Activated CD4-positive, alpha-beta memory T cell treated with anti-CD3 and anti-CD28 coated beads for 36 hours (primary cell): ENCODE measurements at regions of chr14 and their contacts with region 1.

Region 1: GRCh38 chr14:60331201-60332045 is 82.4 kb downstream of the PPM1A start:
- DNase-seq: peak; percentile 85
- H3K4me3 Mint-ChIP-seq: peak overlapping the region; percentile 84
- H3K27ac Mint-ChIP-seq: peak overlapping the region; percentile 85
- H3K4me1 Mint-ChIP-seq: peaks cover 37% of the 10 kb centered on the region
- H3K27me3 Mint-ChIP-seq: peaks cover 36% of the 10 kb centered on the region

Region 2: GRCh38 chr14:59964251-59965007 is 367.0 kb before region 1 on chr14:
- CTCF ChIA-PET with region 1: interaction called, 13 read pairs
- POLR2A ChIA-PET with region 1: no interaction called
- intact Hi-C with region 1: loop called (anchors 5 kb)
- DNase-seq: no peak
- H3K4me3 Mint-ChIP-seq: peak overlapping the region; percentile 74
- H3K27ac Mint-ChIP-seq: peak overlapping the region; percentile 87
- H3K4me1 Mint-ChIP-seq: peaks cover 12% of the 10 kb centered on the region
- H3K27me3 Mint-ChIP-seq: no peaks in the 10 kb centered on the region

Region 3: DNA sequence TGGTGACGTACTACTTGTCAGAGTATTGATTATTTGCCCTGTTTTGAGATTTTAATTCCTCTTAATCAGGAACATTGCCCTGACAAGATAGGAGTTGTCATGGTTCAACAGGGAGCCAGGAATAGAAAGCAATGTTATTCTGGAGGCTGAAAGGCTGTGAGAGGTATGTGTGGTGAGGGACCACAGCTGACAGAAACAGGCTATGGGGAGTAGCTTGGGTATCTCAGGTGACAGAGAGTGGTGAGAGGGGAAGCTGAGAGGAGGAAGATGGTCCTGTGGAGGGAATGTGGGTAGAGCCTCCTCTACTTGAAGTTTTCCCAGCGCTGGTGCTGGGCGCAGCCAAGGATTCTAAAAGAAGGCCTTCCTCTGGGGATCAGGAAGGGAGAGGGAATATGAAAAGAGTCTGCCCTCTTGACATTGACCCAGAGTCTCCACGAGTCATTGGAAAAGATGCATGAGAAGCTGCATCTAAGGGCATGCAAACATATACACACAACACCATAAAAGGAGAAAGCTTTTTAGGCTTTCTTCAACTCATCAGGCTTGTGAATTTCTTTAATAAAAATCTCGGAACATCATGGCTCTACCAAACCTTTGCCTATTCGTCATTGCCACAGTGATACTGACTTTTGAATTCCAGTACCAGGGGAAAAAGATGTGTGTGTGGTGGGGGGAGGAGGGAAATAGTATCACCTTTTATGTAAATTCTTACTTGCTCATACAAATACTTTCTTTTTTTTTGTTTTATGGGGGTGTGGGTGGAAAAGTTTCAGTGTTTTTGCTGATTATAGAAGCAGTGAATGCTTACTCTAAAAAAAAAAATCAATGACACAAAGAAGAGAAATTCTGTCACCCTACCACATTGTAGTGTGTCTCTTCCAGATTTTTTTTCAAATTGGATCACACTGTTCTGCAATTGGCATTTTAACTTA is 126.3 kb before region 1 on chr14:
- CTCF ChIA-PET with region 1: interaction called, 4 read pairs
- POLR2A ChIA-PET with region 1: no interaction called
- intact Hi-C with region 1: loop called (anchors 5 kb)
- DNase-seq: no peak
- H3K4me3 Mint-ChIP-seq: no peak overlapping the region
- H3K27ac Mint-ChIP-seq: no peak overlapping the region
- H3K4me1 Mint-ChIP-seq: peaks cover 20% of the 10 kb centered on the region
- H3K27me3 Mint-ChIP-seq: peaks cover 20% of the 10 kb centered on the region

Region 4: DNA sequence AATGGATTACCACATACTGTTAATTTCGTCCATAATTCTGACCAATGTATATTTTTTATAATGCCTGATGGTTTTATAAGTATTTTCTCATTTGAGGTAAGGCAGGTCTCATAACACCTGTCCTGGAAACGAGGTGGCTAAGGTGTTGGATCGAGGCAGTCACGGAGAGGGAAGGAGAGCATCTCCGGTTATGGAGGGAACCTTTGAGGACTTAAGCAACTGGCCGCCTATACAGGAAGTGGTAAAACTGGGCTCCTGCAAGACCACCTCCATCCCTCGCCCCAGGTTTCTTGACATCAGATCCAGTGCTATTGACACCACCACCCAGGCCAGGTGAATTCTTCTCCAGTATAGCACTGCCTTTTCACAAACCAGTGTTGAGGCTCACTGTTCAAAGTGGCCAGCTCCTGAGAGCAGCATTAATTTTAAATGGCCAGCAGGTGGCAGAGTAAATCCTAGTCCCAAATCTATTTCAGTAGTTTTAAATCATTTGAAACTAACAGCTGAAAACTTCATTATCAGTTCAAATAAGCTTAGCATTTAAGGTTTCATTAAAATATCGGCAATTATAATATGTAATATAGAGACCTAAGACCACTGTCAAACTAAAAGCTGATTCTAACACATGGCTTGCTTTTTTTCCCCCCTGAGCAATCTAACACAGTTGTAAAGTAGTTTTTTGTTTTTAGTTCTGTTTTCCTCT is 18.4 kb after region 1 on chr14:
- CTCF ChIA-PET with region 1: interaction called, 18 read pairs
- POLR2A ChIA-PET with region 1: no interaction called
- intact Hi-C with region 1: no loop called
- DNase-seq: peak; percentile 24
- H3K4me3 Mint-ChIP-seq: no peak overlapping the region
- H3K27ac Mint-ChIP-seq: no peak overlapping the region
- H3K4me1 Mint-ChIP-seq: no peaks in the 10 kb centered on the region
- H3K27me3 Mint-ChIP-seq: no peaks in the 10 kb centered on the region

Region 5: DNA sequence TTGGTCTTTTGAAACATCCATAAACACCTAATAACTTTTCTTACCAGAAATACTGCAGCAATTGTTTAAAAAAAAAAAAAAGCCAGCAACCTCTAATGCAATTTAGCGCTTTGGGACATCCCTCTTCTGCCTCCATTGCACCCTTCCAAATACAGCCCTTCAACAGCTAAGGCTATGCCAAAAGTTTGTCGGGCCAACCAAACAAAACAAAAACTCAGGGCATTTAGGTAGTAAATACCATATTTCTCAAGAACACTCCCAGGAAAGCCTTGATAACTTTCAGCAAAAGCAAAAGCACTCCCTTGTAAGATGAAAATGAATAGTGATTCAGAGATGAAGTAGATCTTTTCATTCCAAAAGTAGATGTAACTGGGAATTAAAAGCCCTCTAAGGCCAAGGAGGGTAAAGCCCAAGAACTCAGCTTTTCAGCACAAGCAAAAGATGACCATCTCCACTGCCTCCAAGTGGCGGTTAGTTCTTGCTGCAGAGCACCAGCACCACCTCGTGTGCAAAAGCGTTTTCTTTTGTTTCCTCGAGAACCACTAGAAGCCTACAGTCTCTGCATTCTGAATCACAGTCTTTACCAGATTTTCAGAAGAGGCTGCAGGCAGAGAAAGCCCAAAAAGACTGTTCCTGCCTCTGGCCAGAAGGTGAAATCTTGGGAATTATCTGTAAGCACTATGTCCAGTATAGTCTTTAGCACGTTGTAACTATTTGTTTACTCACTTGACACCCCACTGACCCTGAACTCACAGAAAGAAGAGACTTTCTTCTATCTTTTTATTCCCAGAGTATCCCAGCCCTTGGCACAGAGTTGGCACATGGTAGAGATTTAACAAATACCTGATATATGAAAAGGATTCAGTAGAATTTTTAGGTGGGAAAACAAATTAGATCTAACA is 230.7 kb after region 1 on chr14:
- CTCF ChIA-PET with region 1: interaction called, 7 read pairs
- POLR2A ChIA-PET with region 1: no interaction called
- intact Hi-C with region 1: loop called (anchors 1 kb)
- DNase-seq: peak; percentile 53
- H3K4me3 Mint-ChIP-seq: no peak overlapping the region
- H3K27ac Mint-ChIP-seq: no peak overlapping the region
- H3K4me1 Mint-ChIP-seq: no peaks in the 10 kb centered on the region
- H3K27me3 Mint-ChIP-seq: peaks cover 3% of the 10 kb centered on the region